Naive thymus-derived CD4-positive, alpha-beta T cell (primary cell): ENCODE measurements at regions of chr5 and their contacts with region 1.

Region 1: DNA sequence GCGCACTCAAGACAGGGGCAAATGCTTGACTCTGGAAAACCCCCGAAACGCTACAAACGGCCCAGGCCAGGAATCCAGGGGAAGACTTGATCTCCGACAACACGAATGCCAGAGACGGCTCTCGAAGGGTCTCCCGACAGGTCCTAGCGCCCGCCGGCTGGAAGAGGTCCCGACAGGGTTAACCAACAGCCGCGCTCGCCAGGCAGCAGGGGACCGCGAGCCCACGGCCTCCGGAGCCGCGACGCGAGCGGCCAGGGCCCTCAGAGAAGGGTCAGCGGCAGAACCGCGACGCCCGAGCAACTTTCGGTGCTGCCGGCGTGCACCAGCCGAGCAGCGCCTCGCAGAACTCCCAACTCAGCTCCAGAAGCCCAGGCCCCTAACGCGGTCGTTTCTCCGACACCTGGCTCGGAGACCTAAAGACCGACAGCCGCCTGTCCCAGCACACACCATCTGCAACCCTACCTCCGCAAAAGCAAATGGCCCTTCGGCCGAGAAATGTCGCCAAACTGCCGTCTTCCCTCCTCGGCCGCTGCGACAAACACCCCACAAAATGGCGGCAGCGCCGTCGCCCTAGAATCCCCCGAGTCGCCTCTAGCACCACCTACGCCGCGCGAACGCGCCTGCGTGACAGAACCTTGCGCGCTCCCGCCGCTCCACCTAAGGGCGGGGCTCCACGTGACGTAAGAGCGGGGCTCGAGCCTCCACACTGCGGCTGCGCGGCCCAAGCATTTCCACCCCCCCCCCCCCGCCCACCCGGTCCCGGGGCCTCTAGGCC is at the start of gene CLK4:
- DNase-seq: peak; percentile 94 to 98 (median 97)
- ATAC-seq: peak; percentile 96
- H3K4me3 ChIP-seq: peak within 1 kb of the TSS; percentile 81
- H3K4me3 Mint-ChIP-seq: peak within 1 kb of the TSS; percentile 95 to 100 (median 98)
- H3K27ac ChIP-seq: peak within 1 kb of the TSS; percentile 98
- H3K27ac Mint-ChIP-seq: peak within 1 kb of the TSS; percentile 99 to 100 (median 99)
- H3K4me1 ChIP-seq: peaks cover 21 to 34% of the 10 kb centered on the region in 2 donors
- H3K4me1 Mint-ChIP-seq: peaks cover 23 to 43% (median 40%) of the 10 kb centered on the region in 7 donors
- H3K27me3 ChIP-seq: no peaks in the 10 kb centered on the region
- H3K27me3 Mint-ChIP-seq: peaks cover 0 to 15% (median 0%) of the 10 kb centered on the region in 5 donors
- total RNA-seq, gene CLK4: 38.0 to 154 (median 106) TPM

Region 2: DNA sequence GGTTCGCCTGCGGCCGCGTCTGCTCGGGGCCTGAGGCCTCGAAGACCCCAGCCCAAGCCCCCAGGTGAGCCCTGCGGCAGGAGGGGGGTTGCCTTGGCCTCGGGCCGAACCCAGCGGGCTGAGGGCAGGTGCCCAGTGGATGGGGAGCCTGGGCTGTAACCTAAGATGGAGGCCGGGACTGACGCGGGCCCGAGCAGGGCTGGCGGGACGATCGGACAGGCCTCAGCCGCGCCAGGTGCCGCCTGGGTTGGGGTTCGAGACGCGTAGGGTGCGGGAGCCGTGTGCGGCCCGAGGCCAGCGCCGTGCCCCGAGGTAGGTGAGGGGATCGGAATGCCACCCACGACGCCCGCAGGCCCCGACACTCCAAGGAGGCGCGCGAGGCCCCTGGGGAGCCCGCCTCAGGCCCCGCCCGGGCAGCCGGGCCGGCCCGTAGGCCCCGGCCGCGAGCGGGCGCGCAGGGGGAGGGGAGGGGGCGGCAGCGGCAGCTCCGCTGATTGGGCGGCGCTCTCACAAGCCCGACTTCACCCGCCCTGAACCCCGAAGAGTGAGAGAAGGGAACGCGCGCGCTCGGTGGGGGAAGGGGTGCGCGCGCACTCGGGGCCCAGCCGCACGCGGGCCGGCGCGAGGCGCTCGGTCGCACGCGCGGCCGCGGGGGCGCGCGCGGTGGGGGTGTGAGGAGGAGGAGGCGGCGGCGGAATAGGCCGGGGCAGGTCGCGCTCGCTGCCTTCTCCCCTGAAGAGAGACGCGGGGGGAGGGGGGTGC is 1493.4 kb before region 1 on chr5 and contains the start of gene NSD1:
- CTCF ChIA-PET with region 1: no interaction called
- POLR2A ChIA-PET with region 1: no interaction called
- intact Hi-C with region 1: loop called in 1 of 2 experiments (anchors 5 kb)
- DNase-seq: peak; percentile 86 to 94 (median 93)
- ATAC-seq: peak; percentile 89
- H3K4me3 ChIP-seq: peak within 1 kb of the TSS; percentile 61
- H3K4me3 Mint-ChIP-seq: peak within 1 kb of the TSS; percentile 60 to 88 (median 85)
- H3K27ac ChIP-seq: peak within 1 kb of the TSS; percentile 80
- H3K27ac Mint-ChIP-seq: peak within 1 kb of the TSS; percentile 48 to 95 (median 89)
- H3K4me1 ChIP-seq: peaks cover 47 to 57% of the 10 kb centered on the region in 2 donors
- H3K4me1 Mint-ChIP-seq: peaks cover 34 to 72% (median 65%) of the 10 kb centered on the region in 7 donors
- H3K27me3 ChIP-seq: no peaks in the 10 kb centered on the region
- H3K27me3 Mint-ChIP-seq: no peaks in the 10 kb centered on the region
- total RNA-seq, gene NSD1: 105 to 126 (median 117) TPM

Region 3: DNA sequence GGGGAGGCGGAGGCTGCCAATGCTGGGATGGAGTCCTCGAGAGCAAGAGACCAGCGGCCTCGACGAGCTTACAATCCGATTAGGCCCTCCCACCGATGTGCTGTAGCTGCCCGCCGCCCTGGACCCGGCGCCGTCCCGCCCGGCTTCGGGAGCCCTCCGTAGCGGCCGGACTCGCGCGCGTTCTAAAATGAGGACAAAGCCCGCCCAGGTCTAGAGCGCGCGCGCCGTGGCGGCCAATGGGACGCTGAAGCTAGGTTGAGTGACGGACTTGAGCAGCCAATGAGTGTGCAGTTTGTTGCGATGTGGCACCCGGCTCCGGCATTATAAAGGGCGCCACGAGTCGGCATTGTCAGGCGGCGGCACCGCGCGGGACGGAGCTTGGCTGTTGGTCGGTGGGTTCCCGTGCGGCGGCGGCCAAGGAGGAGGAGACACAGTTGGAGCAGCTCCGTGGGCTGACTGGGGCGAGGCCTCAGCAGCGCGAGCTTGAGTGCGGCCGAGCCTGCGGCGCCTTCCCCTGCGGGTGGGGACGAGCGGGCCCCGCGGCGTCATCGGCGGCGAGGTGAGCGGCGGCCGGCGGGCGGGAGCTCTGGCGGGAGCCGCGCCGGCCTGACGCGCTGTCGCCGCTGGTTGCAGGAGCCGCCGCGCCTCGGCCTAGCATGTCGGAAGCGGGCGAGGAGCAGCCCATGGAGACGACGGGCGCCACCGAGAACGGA is 422.3 kb before region 1 on chr5 and contains the start of gene HNRNPAB:
- CTCF ChIA-PET with region 1: no interaction called
- POLR2A ChIA-PET with region 1: no interaction called
- intact Hi-C with region 1: loop called in 1 of 2 experiments (anchors 1 kb)
- DNase-seq: peak; percentile 93 to 98 (median 95)
- ATAC-seq: peak; percentile 92
- H3K4me3 ChIP-seq: peak within 1 kb of the TSS; percentile 94
- H3K4me3 Mint-ChIP-seq: peak within 1 kb of the TSS; percentile 90 to 100 (median 99)
- H3K27ac ChIP-seq: peak within 1 kb of the TSS; percentile 88
- H3K27ac Mint-ChIP-seq: peak within 1 kb of the TSS; percentile 91 to 100 (median 99)
- H3K4me1 ChIP-seq: peaks cover 11 to 25% of the 10 kb centered on the region in 2 donors
- H3K4me1 Mint-ChIP-seq: peaks cover 26 to 35% (median 33%) of the 10 kb centered on the region in 7 donors
- H3K27me3 ChIP-seq: no peaks in the 10 kb centered on the region
- H3K27me3 Mint-ChIP-seq: peaks cover 0 to 2% (median 0%) of the 10 kb centered on the region in 5 donors
- total RNA-seq, gene HNRNPAB: 68.9 to 197 (median 82.6) TPM

Region 4: GRCh38 chr5:178590141-178590923 is 36.3 kb before region 1 on chr5 and contains the start of gene COL23A1:
- CTCF ChIA-PET with region 1: no interaction called
- POLR2A ChIA-PET with region 1: no interaction called
- intact Hi-C with region 1: loop called in 1 of 2 experiments (anchors 2 kb)
- DNase-seq: peak; percentile 21 to 48 (median 36)
- ATAC-seq: peak; percentile 72
- H3K4me3 ChIP-seq: peak within 1 kb of the TSS; percentile 0
- H3K4me3 Mint-ChIP-seq: peak within 1 kb of the TSS; percentile 73 to 91 (median 84)
- H3K27ac ChIP-seq: no peak within 1 kb of the TSS
- H3K27ac Mint-ChIP-seq: no peak within 1 kb of the TSS
- H3K4me1 ChIP-seq: no peaks in the 10 kb centered on the region
- H3K4me1 Mint-ChIP-seq: peaks cover 0 to 13% (median 7%) of the 10 kb centered on the region in 7 donors
- H3K27me3 ChIP-seq: peaks cover 0 to 5% of the 10 kb centered on the region in 2 donors
- H3K27me3 Mint-ChIP-seq: peaks cover 48 to 58% (median 53%) of the 10 kb centered on the region in 5 donors
- total RNA-seq, gene COL23A1: 0.13 to 0.32 (median 0.22) TPM in 3 of 5 experiments, not detected in the others

Region 5: GRCh38 chr5:178859625-178860531 is 233.2 kb after region 1 on chr5 and contains the start of gene ZNF354B:
- CTCF ChIA-PET with region 1: no interaction called
- POLR2A ChIA-PET with region 1: no interaction called
- intact Hi-C with region 1: loop called (anchors 1 kb)
- DNase-seq: peak; percentile 64 to 87 (median 81)
- ATAC-seq: peak; percentile 98
- H3K4me3 ChIP-seq: peak within 1 kb of the TSS; percentile 77
- H3K4me3 Mint-ChIP-seq: peak within 1 kb of the TSS; percentile 85 to 95 (median 93)
- H3K27ac ChIP-seq: peak within 1 kb of the TSS; percentile 75
- H3K27ac Mint-ChIP-seq: peak within 1 kb of the TSS; percentile 71 to 95 (median 90)
- H3K4me1 ChIP-seq: peaks cover 5 to 6% of the 10 kb centered on the region in 2 donors
- H3K4me1 Mint-ChIP-seq: peaks cover 22 to 34% (median 30%) of the 10 kb centered on the region in 7 donors
- H3K27me3 ChIP-seq: no peaks in the 10 kb centered on the region
- H3K27me3 Mint-ChIP-seq: peaks cover 0 to 4% (median 2%) of the 10 kb centered on the region in 5 donors
- total RNA-seq, gene ZNF354B: 12.3 to 36.7 (median 14.4) TPM

Region 6: DNA sequence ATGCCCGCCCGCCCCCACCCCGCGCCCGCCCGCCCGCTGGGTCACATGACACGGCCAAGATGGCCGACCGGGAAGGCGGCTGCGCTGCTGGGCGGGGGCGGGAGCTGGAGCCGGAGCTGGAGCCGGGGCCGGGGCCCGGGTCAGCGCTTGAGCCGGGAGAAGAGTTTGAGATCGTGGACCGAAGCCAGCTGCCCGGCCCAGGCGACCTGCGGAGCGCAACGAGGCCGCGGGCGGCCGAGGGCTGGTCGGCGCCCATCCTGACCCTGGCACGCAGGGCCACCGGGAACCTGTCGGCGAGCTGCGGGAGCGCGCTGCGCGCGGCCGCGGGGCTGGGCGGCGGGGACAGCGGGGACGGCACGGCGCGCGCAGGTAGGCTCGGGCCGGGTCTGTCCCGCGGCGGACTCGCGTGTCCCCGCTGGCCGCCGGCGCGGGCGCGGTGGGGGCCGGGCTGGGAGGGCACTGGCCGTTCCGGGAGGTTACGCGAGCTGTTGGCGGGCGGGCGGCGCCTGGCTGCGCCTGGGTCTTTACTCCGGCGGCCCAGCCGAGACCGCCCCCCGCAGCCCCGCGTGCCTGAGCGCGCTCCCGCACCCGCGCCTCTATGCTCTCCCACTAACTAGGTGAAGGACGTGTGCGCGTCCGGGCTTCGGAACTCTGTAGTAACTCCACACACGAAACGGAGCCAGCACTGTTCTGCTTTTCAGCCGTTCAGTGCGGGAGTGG is 924.0 kb after region 1 on chr5 and contains the start of gene RUFY1:
- CTCF ChIA-PET with region 1: no interaction called
- POLR2A ChIA-PET with region 1: no interaction called
- intact Hi-C with region 1: loop called (anchors 2 kb)
- DNase-seq: peak; percentile 74 to 92 (median 87)
- ATAC-seq: peak; percentile 90
- H3K4me3 ChIP-seq: peak within 1 kb of the TSS; percentile 84
- H3K4me3 Mint-ChIP-seq: peak within 1 kb of the TSS; percentile 94 to 99 (median 96)
- H3K27ac ChIP-seq: peak within 1 kb of the TSS; percentile 87
- H3K27ac Mint-ChIP-seq: peak within 1 kb of the TSS; percentile 91 to 99 (median 98)
- H3K4me1 ChIP-seq: peaks cover 12 to 15% of the 10 kb centered on the region in 2 donors
- H3K4me1 Mint-ChIP-seq: peaks cover 10 to 49% (median 35%) of the 10 kb centered on the region in 7 donors
- H3K27me3 ChIP-seq: no peaks in the 10 kb centered on the region
- H3K27me3 Mint-ChIP-seq: peaks cover 0 to 4% (median 0%) of the 10 kb centered on the region in 5 donors
- total RNA-seq, gene RUFY1: 31.8 to 63.0 (median 52.3) TPM

Region 7: GRCh38 chr5:179697993-179698934 is 1071.6 kb after region 1 on chr5:
- CTCF ChIA-PET with region 1: no interaction called
- POLR2A ChIA-PET with region 1: no interaction called
- intact Hi-C with region 1: loop called in 1 of 2 experiments (anchors 2 kb)
- DNase-seq: peak; percentile 94 to 99 (median 99)
- ATAC-seq: peak; percentile 93
- H3K4me3 ChIP-seq: peak overlapping the region; percentile 72
- H3K4me3 Mint-ChIP-seq: peak overlapping the region; percentile 89 to 97 (median 96)
- H3K27ac ChIP-seq: peak overlapping the region; percentile 100
- H3K27ac Mint-ChIP-seq: peak overlapping the region; percentile 94 to 100 (median 98)
- H3K4me1 ChIP-seq: peaks cover 21 to 25% of the 10 kb centered on the region in 2 donors
- H3K4me1 Mint-ChIP-seq: peaks cover 23 to 53% (median 46%) of the 10 kb centered on the region in 7 donors
- H3K27me3 ChIP-seq: no peaks in the 10 kb centered on the region
- H3K27me3 Mint-ChIP-seq: no peaks in the 10 kb centered on the region